ENCODE measurements at regions of chr16 and their contacts with region 1.

Region 1: DNA sequence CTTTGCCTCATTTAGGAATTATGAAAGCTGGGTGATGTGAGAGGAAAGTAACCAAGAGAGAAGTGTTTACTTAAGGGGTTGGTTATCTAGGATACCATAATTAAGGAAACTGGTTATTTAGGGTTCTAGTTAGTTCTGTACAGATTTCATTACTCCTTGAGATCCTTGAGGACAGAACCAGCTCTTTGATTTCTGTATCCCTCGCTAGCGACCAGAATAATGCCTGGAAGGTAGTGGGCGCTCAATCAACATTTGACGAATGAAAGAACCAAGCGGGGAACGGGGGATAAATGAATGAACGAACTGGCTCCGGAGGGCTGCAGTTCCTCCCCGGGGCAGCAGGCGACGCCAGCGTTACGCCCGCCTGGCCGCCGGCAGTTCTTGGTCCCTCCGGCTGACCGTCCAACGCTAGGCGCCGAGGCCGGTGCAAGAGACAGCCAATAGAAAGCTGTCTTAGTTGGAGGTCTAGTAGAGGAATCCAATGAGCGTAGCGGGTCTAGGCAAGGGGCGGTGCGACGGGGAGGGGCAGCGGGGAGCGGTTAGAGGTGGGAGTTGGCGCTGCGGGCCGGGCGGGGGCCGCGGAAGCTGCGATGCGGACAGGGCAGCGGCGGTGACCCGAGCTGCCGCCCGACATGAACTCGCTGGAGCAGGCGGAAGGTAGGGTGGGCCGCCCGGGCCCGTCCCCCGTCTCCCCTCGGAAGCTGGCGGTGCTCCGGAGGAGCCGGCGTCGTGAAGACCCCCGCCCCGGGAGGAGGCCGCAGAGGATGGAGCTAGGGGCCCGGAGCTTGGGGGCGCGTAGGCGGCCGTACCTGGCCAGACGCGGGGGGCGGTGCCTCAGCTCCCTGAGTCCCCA is at the start of gene CNEP1R1:
- DNase-seq: peak; percentile 95
- H3K4me3 Mint-ChIP-seq: peak within 1 kb of the TSS; percentile 96
- H3K27ac Mint-ChIP-seq: peak within 1 kb of the TSS; percentile 87
- H3K4me1 Mint-ChIP-seq: peaks cover 29% of the 10 kb centered on the region
- H3K27me3 Mint-ChIP-seq: peaks cover 5% of the 10 kb centered on the region
- total RNA-seq, gene CNEP1R1: 30.1 to 36.1 TPM

Region 2: DNA sequence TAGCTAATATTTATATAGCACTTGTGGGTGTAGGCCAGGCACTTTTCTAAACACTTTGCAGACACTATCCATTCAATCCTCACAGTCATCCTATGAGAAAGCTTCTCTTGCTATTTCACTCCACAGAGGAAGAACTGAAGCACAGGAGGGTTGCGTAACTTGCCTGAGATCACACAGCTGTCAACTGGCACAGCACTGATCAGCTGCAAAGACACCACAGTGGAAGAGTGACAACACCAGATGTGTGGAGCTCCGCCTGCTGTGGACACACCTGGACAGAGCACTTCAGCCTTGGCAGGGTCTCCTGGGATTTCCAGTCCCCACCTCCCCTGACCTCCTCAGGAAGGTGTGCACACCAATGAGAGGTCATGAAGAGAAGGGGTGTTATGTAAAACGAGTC is 13.2 kb before region 1 on chr16:
- CTCF ChIA-PET with region 1: interaction called, 11 read pairs
- POLR2A ChIA-PET with region 1: interaction called, 4 read pairs
- DNase-seq: no peak
- H3K4me3 Mint-ChIP-seq: no peak overlapping the region
- H3K27ac Mint-ChIP-seq: no peak overlapping the region
- H3K4me1 Mint-ChIP-seq: no peaks in the 10 kb centered on the region
- H3K27me3 Mint-ChIP-seq: peaks cover 2% of the 10 kb centered on the region

Region 3: GRCh38 chr16:50065624-50066481 is 40.9 kb after region 1 on chr16 and contains the start of gene HEATR3:
- CTCF ChIA-PET with region 1: interaction called, 80 read pairs
- POLR2A ChIA-PET with region 1: interaction called, 37 read pairs
- DNase-seq: peak; percentile 96
- H3K4me3 Mint-ChIP-seq: peak within 1 kb of the TSS; percentile 87
- H3K27ac Mint-ChIP-seq: peak within 1 kb of the TSS; percentile 92
- H3K4me1 Mint-ChIP-seq: peaks cover 42% of the 10 kb centered on the region
- H3K27me3 Mint-ChIP-seq: no peaks in the 10 kb centered on the region
- total RNA-seq, gene HEATR3: 20.7 to 21.3 TPM

Region 4: DNA sequence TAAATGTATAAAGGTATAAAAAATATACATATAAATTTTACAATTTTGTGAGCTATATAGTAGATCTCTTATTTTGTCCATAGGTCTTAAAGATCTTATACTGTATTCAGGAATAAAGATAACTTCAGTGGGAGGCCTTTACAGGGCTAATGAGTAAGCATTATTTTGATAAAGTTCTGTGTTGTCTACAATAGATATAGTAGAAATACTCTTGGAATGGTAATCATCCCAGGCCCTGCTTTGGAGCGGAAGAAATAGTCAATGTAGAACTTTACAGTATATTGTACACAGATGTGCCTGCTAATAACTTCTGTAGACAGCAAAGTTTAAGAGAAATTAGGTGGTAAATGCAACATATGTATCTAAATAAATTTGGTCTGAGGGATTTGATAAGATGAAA is 170.8 kb after region 1 on chr16:
- CTCF ChIA-PET with region 1: interaction called, 28 read pairs
- POLR2A ChIA-PET with region 1: interaction called, 3 read pairs
- DNase-seq: no peak
- H3K4me3 Mint-ChIP-seq: no peak overlapping the region
- H3K27ac Mint-ChIP-seq: no peak overlapping the region
- H3K4me1 Mint-ChIP-seq: peaks cover 53% of the 10 kb centered on the region
- H3K27me3 Mint-ChIP-seq: no peaks in the 10 kb centered on the region

Region 5: DNA sequence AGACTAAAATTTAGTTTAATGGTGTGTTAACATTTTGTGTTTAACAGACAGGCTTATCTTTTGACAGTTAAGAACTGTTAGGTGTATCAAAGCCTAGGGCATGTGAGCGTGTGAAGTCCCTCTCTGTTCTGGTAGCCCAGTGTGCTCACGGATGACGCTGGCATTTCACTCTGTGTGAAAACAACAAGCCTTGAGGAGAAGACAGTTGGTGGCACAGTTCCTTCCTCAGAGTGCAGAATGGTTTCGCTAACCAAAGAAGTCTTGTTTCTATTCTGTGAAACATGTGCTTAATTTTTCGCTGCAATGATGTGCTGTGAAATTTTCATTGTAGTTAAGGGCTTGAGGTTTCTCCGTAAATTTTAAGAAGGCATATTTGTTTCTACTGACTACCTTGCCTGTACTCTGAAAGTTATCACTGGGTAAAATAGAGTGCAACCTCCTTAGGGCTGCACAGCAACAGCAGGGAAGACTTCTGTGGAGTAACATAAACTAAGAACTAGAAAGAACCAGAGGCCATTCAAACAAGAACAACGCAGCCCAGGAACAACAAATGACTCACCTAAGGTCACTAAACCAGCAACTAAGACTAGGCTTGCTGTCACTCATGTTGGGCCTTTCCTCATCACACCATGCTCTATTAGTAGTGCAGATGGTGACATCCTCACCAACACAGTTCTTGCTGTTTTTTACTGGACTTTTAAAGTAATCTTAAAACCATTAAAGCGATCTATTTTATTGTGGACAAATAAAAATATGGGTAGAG is 310.5 kb after region 1 on chr16:
- CTCF ChIA-PET with region 1: interaction called, 11 read pairs
- POLR2A ChIA-PET with region 1: interaction called, 5 read pairs
- DNase-seq: peak; percentile 66
- H3K4me3 Mint-ChIP-seq: peak overlapping the region; percentile 29
- H3K27ac Mint-ChIP-seq: peak overlapping the region; percentile 95
- H3K4me1 Mint-ChIP-seq: peaks cover 82% of the 10 kb centered on the region
- H3K27me3 Mint-ChIP-seq: no peaks in the 10 kb centered on the region

Region 6: GRCh38 chr16:50422926-50423325 is 398.0 kb after region 1 on chr16:
- CTCF ChIA-PET with region 1: no interaction called
- POLR2A ChIA-PET with region 1: no interaction called
- DNase-seq: no peak
- H3K4me3 Mint-ChIP-seq: no peak overlapping the region
- H3K27ac Mint-ChIP-seq: no peak overlapping the region
- H3K4me1 Mint-ChIP-seq: no peaks in the 10 kb centered on the region
- H3K27me3 Mint-ChIP-seq: peaks cover 14% of the 10 kb centered on the region

Region 7: DNA sequence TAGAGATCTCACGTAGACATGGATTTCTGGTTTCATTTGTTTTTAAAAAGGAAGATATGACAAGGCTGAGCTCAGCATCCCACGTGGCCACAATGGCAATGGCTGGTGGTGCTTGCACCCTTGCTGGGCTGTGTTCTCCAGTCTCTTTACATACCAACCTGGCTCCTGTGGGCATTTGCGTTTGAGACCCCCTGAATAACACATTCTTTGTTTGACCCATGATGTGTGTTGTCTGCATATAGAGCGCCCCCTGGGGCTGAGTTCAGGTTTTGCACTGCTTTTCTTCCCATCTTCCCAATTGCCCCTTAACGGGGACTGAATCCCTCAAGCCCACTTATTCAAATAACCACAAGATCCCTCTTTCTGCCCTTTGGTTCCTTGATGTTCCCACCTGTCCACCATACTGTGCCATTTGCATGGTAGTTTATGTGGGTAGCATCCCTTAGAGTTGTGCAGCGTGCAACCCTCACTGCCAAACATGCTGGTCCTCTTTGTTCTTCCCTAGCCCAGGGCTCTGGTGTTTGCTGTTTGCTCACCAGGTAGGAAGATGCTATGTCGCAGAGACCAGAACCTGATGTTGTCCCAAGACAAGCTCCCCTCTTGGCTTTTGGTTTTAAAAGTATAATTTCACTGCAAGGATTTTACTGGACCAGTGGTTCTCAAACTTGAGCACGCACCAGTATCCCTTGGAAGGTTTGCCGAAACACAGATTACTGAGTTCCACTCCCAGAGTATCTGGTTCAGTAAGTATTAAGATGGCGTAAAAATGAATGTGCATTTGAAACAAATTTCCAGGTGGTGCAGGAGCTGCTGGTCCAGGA is 484.8 kb after region 1 on chr16:
- CTCF ChIA-PET with region 1: interaction called, 12 read pairs
- POLR2A ChIA-PET with region 1: no interaction called
- DNase-seq: peak; percentile 56
- H3K4me3 Mint-ChIP-seq: no peak overlapping the region
- H3K27ac Mint-ChIP-seq: no peak overlapping the region
- H3K4me1 Mint-ChIP-seq: no peaks in the 10 kb centered on the region
- H3K27me3 Mint-ChIP-seq: no peaks in the 10 kb centered on the region

Measured in activated CD4-positive, alpha-beta memory T cell treated with anti-CD3 and anti-CD28 coated beads, Interleukin-2, amount 10 ng/mL, durations not matched to agents 7 days and 5 days (primary cell).